Activated CD8-positive, alpha-beta T cell treated with anti-CD3 and anti-CD28 coated beads for 36 hours (primary cell): ENCODE measurements at regions of chr2 and their contacts with region 1.

Region 1: GRCh38 chr2:96960153-96960961 is 26.0 kb downstream of the FAM178B start:
- DNase-seq: peak; percentile 92
- ATAC-seq: peak; percentile 74
- H3K4me3 Mint-ChIP-seq: no peak overlapping the region
- H3K27ac Mint-ChIP-seq: no peak overlapping the region
- H3K4me1 Mint-ChIP-seq: peaks cover 48% of the 10 kb centered on the region
- H3K27me3 Mint-ChIP-seq: no peaks in the 10 kb centered on the region
- CTCF ChIP-seq: peak; percentile 97

Region 2: DNA sequence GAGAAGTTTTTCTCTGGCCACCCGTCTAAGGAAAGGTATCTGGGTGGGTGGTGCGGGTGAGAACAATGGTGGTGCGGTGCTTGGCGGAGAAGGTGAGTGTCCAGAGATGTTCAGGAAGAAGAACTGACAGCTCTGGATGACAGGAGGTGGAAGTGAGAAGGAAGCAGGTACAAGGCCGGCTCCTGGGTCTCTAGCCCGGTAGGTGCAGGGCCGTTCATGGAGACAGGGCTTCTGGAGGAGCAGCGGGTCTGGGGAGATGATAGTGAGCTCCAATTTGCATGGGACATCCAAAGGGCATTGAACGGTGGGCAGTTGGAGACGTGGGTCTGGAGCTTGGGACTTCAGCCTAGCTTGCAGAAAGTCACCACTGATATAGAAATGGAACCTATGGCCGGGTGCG is 135.3 kb after region 1 on chr2:
- CTCF ChIA-PET with region 1: no interaction called
- POLR2A ChIA-PET with region 1: no interaction called
- intact Hi-C with region 1: loop called (anchors 10 kb)
- DNase-seq: no peak
- ATAC-seq: no peak
- H3K4me3 Mint-ChIP-seq: peak overlapping the region; percentile 77
- H3K27ac Mint-ChIP-seq: peak overlapping the region; percentile 68
- H3K4me1 Mint-ChIP-seq: peaks cover 10% of the 10 kb centered on the region
- H3K27me3 Mint-ChIP-seq: no peaks in the 10 kb centered on the region
- CTCF ChIP-seq: no peak